Activated CD4-positive, alpha-beta T cell treated with anti-CD3 and anti-CD28 coated beads, Interleukin-2, amount 10 ng/mL, durations not matched to agents 24 days and 14 days (primary cell): ENCODE measurements at regions of chr4 and their contacts with region 1.

Region 1: GRCh38 chr4:168864821-168865541 is 145.1 kb downstream of the CBR4 start:
- DNase-seq: no peak
- H3K4me3 Mint-ChIP-seq: no peak overlapping the region
- H3K27ac Mint-ChIP-seq: peak overlapping the region; percentile 79
- H3K4me1 Mint-ChIP-seq: peaks cover 48% of the 10 kb centered on the region
- H3K27me3 Mint-ChIP-seq: no peaks in the 10 kb centered on the region

Region 2: DNA sequence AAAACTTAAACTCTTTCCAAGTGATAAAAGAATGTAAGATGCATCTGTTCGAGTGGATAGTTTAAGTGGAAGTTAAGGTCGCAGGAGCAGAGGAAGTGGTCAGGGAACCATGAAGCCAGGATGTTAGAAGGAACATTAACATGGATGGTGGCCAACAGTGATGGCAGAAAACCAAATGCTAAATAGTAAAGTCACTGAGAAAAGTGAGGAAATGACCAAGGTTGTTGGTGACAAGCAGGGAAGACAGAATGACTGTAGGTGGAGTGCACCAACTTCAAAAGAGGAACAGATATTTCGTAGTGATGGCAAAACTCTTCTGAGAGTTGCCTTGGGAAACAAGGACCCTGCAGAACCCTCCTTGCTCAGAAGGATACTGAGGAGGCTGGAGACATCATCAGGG is 142.0 kb before region 1 on chr4:
- intact Hi-C with region 1: loop called (anchors 5 kb)
- DNase-seq: no peak
- H3K4me3 Mint-ChIP-seq: peak overlapping the region; percentile 29
- H3K27ac Mint-ChIP-seq: peak overlapping the region; percentile 79
- H3K4me1 Mint-ChIP-seq: peaks cover 24% of the 10 kb centered on the region
- H3K27me3 Mint-ChIP-seq: peaks cover 2% of the 10 kb centered on the region

Region 3: DNA sequence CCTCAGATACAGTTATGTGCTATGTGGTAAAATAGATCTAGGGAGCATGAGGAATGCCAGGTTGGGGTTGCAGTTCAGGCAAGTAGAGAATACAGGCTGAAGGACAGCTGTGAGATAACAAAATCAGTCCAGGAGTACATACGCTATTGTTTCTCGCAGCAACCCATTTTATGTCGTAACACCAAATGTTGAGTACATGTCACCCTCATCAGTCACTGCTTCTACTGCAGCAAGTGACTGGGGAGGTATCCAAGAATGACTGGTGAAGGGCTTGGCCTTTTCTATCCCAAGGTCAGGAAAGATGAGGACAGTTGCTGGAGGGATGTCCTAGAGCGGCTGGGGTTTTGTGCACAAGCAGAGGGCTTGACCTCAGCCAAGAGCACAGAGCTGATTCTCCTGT is 27.1 kb before region 1 on chr4:
- intact Hi-C with region 1: loop called (anchors 1 kb)
- DNase-seq: no peak
- H3K4me3 Mint-ChIP-seq: no peak overlapping the region
- H3K27ac Mint-ChIP-seq: no peak overlapping the region
- H3K4me1 Mint-ChIP-seq: peaks cover 35% of the 10 kb centered on the region
- H3K27me3 Mint-ChIP-seq: peaks cover 28% of the 10 kb centered on the region

Region 4: DNA sequence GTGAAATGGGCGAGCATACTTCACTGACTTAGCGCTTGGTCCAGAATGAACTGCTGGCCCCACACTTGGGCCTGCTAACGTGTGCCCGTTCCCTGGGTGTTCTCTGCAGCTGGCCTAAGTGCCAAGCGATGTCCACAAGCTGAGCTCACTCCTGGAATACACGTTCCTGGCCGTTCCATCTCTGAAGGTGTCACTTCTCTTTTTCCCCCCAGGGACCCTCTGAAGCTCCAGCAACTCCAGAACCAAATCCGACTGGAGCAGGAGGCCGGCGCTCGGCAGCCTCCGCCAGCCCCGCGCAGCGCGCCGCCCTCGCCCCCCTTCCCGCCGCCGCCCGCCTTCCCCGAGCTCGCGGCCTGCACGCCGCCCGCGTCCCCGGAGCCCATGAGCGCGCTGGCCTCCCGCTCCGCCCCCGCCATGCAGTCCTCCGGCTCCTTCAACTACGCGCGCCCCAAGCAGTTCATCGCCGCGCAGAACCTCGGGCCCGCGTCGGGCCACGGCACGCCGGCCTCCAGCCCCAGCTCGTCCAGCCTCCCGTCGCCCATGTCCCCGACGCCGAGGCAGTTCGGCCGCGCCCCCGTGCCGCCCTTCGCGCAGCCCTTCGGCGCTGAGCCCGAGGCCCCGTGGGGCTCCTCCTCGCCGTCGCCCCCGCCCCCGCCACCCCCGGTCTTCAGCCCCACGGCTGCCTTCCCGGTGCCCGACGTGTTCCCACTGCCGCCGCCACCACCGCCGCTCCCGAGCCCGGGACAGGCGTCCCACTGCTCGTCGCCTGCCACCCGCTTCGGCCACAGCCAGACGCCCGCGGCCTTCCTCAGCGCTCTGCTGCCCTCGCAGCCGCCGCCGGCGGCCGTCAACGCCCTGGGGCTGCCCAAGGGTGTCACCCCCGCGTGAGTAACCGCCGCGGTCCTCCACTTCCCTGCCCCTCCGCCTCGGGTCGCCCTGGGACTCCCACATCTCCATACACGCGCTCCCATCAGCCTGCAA is 12.8 kb after region 1 on chr4:
- intact Hi-C with region 1: loop called (anchors 1 kb)
- DNase-seq: peak; percentile 80
- H3K4me3 Mint-ChIP-seq: peak overlapping the region; percentile 84
- H3K27ac Mint-ChIP-seq: peak overlapping the region; percentile 65
- H3K4me1 Mint-ChIP-seq: peaks cover 20% of the 10 kb centered on the region
- H3K27me3 Mint-ChIP-seq: peaks cover 43% of the 10 kb centered on the region

Region 5: DNA sequence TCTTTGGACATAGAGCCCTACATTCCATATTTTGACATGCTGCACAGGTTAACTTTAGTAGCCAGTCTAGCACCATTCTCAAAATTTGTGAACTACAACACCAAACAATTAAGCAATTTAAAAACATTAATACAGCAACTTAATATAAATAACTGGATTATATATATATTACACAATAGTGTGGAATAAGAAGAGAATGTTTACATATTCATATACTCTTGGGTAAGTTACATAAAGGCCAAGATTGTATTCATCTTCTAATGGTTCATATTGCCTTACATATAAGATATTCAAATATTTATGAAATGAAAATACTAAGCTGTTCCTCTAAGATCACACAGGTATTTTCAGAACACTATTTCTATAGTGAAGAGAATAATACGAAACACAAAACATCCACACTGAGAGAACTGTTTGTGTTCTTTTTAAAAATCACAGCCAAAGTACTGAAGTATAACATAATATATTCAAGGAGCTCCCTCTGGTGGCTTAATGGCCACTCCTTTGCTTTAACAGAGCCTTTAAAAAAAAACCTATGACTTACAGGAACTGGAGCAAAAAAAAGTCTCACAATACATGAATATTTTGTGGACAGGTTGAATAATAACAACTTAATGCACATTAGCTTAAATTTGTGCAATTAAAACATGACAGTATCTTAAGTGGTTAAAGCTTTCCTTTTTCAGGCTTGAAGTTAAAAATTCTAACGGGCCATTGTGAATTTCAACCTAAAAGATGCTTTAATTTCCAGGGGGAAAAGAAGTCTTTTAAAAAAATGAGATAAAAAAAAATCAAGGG is 701.2 kb after region 1 on chr4:
- intact Hi-C with region 1: no loop called
- DNase-seq: peak; percentile 77
- H3K4me3 Mint-ChIP-seq: no peak overlapping the region
- H3K27ac Mint-ChIP-seq: no peak overlapping the region
- H3K4me1 Mint-ChIP-seq: peaks cover 6% of the 10 kb centered on the region
- H3K27me3 Mint-ChIP-seq: no peaks in the 10 kb centered on the region